ENCODE measurements at regions of chr16 and their contacts with region 1.

Region 1: DNA sequence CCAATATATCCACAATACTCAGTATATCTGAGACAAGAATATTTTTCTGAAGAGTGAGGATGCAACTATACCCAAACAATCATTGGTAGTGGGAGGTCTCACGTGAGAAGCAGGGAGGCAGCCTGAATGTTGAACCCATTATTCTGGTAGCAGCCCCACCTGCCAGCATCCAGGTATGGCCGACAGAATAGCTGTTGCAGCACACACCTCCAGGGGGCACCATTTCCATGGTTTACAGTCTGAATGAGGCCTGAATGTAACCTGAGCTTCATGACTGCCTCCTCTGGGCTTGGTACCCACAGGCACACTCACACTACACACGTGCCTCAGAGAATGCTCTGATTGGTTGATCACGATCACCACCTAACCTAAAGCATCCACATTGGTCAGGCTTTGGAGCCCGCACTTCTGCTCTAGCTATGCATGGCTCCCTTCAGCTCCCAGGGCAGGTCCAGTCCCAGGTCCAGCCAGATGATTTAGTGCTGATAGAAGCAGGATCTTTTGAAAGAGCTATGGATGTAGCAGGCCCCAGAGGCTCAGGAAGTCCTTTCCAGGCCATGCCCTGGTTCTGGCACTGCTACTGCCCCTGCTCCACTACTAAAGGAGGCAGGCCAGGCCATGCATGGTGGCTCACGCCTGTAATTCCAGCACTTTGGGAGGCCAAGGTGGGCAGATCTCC is 11.0 kb upstream of the CBFB start:
- DNase-seq: peak; percentile 59 to 78
- ATAC-seq: peak; percentile 85 to 90 (median 87)
- H3K4me3 ChIP-seq: no peak overlapping the region
- H3K27ac ChIP-seq: no peak overlapping the region
- H3K4me1 ChIP-seq: peaks cover 9% of the 10 kb centered on the region
- H3K27me3 ChIP-seq: no peaks in the 10 kb centered on the region
- CTCF ChIP-seq: peak; percentile 67

Region 2: DNA sequence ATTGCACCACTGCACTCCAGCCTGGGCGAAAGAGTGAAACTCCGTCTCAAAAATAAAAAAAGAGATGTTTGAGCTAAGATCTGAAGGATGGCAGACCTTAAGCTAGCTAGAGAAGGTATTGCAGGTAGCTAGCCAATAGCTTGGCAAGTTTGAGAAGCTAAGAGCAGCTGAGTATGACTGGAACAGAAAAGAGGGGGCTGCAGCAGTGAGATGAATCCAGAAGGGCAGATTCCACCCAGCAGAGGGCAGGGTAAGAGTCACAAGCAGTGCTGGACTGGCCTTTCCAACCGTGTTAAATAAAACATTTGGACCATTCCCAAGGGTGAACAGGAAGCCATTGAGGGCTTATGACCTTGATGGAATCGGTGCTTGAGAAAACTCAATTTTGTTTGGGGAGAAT is 86.1 kb after region 1 on chr16:
- intact Hi-C with region 1: loop called (anchors 5 to 10 kb)
- DNase-seq: no peak
- ATAC-seq: peak in 3 of 4 donors; percentile 60 to 75 (median 63)
- H3K4me3 ChIP-seq: no peak overlapping the region
- H3K27ac ChIP-seq: no peak overlapping the region
- H3K4me1 ChIP-seq: peaks cover 6% of the 10 kb centered on the region
- H3K27me3 ChIP-seq: no peaks in the 10 kb centered on the region
- CTCF ChIP-seq: peak; percentile 32

Region 3: DNA sequence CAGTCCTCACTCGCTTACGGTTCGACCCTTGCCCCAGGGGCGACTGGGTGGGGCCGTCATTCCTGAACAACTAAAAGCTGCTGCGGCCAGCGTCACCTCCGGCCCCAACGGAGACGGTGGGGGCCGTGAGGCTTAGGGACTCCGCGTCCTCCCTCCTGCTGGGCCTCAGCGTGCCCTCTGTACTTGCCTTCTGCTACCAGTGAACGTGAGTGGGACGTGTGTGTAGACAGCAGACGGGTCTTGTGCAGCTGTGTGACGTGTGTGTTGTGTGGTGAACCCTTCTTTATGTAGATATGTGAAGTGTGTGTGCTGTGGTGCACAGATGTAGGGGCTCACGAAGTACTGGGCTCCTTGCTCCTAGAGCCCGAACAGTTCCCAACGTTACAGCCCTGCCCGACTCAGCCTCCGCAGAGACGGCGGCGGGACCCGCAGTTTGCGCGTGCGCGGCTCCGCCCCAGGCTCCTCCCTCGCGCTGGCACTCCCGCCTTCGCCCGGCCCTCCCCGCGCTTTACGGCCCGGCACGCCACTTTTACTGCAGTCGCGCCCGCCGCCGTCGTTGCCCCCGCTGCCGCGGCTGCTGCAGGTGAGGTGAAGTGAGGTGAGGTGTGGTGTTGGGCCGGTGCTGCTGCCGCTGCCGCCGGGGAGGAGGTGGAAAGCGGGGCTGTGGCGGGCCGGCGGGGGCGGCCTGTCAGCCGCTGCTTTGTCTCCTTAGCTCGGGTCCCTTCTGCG is 91.6 kb after region 1 on chr16 and contains the start of gene PHAF1:
- intact Hi-C with region 1: loop called (anchors 5 to 10 kb)
- DNase-seq: peak; percentile 93 to 96
- ATAC-seq: peak; percentile 97
- H3K4me3 ChIP-seq: peak within 1 kb of the TSS; percentile 99
- H3K27ac ChIP-seq: peak within 1 kb of the TSS; percentile 81
- H3K4me1 ChIP-seq: peaks cover 25% of the 10 kb centered on the region
- H3K27me3 ChIP-seq: no peaks in the 10 kb centered on the region
- CTCF ChIP-seq: no peak
- total RNA-seq, gene PHAF1: 12.2 to 19.5 (median 15.5) TPM

Region 4: GRCh38 chr16:67750466-67750865 is 732.5 kb after region 1 on chr16:
- intact Hi-C with region 1: no loop called
- DNase-seq: no peak
- ATAC-seq: peak in 2 of 4 donors; percentile 26 to 27
- H3K4me3 ChIP-seq: no peak overlapping the region
- H3K27ac ChIP-seq: no peak overlapping the region
- H3K4me1 ChIP-seq: peaks cover 4% of the 10 kb centered on the region
- H3K27me3 ChIP-seq: no peaks in the 10 kb centered on the region
- CTCF ChIP-seq: no peak